ENCODE measurements at regions of chr10 and their contacts with region 1.

Region 1: DNA sequence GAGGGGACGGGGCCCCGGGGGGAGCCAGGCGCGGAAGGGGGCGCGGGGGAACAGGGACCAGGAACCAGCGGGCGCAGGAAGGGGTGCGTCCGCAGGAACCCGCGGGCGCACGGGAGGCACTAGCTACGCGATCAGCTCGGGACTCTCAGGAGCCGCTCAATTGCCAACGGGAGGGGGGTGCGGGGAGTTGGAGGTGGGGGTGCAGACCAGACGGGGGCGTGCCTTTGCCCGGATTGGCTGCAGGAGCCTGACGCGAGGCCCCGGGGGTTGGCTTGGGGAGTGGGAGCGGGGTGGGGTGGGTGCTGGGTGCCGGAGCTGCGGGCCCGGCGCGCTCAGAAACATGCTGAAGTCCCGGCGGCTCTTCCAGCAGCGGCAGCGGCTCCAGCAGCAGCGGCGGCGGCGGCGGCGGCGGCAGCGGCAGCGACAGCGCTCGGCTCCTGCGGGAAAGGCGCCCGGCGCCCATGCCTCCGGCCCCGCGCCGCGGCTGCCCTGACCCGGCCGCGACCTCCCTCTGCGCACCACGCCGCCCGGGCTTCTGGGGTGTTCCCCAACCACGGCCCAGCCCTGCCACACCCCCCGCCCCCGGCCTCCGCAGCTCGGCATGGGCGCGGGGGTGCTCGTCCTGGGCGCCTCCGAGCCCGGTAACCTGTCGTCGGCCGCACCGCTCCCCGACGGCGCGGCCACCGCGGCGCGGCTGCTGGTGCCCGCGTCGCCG is at the start of gene ADRB1:
- DNase-seq: peak; percentile 98
- H3K4me3 ChIP-seq: peak within 1 kb of the TSS; percentile 65 to 86
- H3K27ac ChIP-seq: peak within 1 kb of the TSS; percentile 97 to 99
- H3K4me1 ChIP-seq: no peaks in the 10 kb centered on the region
- H3K27me3 ChIP-seq: no peaks in the 10 kb centered on the region
- CTCF ChIP-seq: peak in 1 of 4 experiments; percentile 19
- POLR2A ChIP-seq: peak; percentile 68
- total RNA-seq, gene ADRB1: 10.2 to 15.4 TPM

Region 2: GRCh38 chr10:113854011-113854760 is 189.5 kb before region 1 on chr10 and contains the starts of genes DCLRE1A and NHLRC2:
- intact Hi-C with region 1: loop called (anchors 2 kb)
- DNase-seq: peak; percentile 78
- H3K4me3 ChIP-seq: peak within 1 kb of the TSS; percentile 59 to 85
- H3K27ac ChIP-seq: peak within 1 kb of the TSS; percentile 91 to 98
- H3K4me1 ChIP-seq: no peaks in the 10 kb centered on the region
- H3K27me3 ChIP-seq: no peaks in the 10 kb centered on the region
- CTCF ChIP-seq: no peak
- POLR2A ChIP-seq: no peak
- total RNA-seq, gene DCLRE1A: 6.2 to 9.7 TPM
- total RNA-seq, gene NHLRC2: 49.4 to 89.5 TPM

Region 3: GRCh38 chr10:113958631-113959382 is 84.9 kb before region 1 on chr10:
- intact Hi-C with region 1: loop called (anchors 5 kb)
- DNase-seq: peak; percentile 63
- H3K4me3 ChIP-seq: no peak overlapping the region
- H3K27ac ChIP-seq: peak overlapping the region; percentile 87 to 96
- H3K4me1 ChIP-seq: peaks cover 27% of the 10 kb centered on the region
- H3K27me3 ChIP-seq: no peaks in the 10 kb centered on the region
- CTCF ChIP-seq: no peak
- POLR2A ChIP-seq: no peak

Region 4: GRCh38 chr10:114083040-114083439 is 39.4 kb after region 1 on chr10:
- intact Hi-C with region 1: no loop called
- DNase-seq: no peak
- H3K4me3 ChIP-seq: no peak overlapping the region
- H3K27ac ChIP-seq: peak overlapping the region in 1 of 2 donors; percentile 32
- H3K4me1 ChIP-seq: no peaks in the 10 kb centered on the region
- H3K27me3 ChIP-seq: no peaks in the 10 kb centered on the region
- CTCF ChIP-seq: no peak
- POLR2A ChIP-seq: no peak

Measured in prostate gland (tissue), 2 donors.